Endothelial cell of umbilical vein (primary cell): ENCODE measurements at regions of chr5 and their contacts with region 1.

Region 1: DNA sequence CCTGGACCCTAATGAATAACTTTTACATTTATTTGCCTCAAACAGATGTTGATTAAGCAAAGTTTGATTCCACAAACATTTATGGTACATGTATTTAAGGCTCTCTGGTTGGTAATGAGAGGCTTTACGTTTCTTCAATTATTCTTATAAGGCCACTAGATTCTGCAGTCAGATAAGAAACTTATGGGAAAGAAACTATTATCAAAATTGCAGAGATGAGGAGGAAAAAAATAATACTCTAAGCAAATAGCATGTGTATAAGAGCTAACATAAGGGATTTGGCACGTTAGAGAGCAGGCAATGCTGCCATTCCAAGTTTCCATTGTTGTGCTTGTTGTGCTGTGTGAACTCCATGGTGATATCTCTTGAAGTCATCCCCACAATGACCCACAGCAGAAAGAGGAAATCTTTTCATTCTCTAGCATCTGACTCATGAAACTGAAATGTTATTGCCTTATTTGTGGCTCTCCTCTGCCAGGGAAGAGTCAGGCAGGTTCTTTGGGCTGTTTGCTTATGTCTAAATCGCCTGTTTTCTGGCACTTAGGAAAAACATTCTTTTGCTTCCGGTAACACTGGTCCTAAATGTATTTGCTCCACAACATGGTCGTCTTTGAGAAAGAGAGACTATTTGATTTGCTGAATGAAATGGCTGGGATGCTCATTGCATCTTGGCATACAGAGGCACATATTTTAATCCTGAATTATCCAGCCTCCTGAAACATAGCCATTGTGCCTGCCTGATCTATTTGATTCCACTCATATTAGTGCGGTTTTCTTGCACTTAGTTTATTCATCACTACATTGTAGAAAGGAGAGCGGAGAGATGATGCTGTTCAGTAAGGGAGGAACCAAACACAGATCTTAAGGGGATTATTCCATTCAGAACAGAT is 188.7 kb downstream of the CSNK1G3 start:
- DNase-seq: peak; percentile 99
- H3K4me3 ChIP-seq: no peak overlapping the region
- H3K27ac ChIP-seq: peak overlapping the region; percentile 93
- H3K4me1 ChIP-seq: peaks cover 21% of the 10 kb centered on the region
- H3K27me3 ChIP-seq: no peaks in the 10 kb centered on the region
- CTCF ChIP-seq: no peak
- POLR2A ChIP-seq: peak; percentile 27

Region 2: DNA sequence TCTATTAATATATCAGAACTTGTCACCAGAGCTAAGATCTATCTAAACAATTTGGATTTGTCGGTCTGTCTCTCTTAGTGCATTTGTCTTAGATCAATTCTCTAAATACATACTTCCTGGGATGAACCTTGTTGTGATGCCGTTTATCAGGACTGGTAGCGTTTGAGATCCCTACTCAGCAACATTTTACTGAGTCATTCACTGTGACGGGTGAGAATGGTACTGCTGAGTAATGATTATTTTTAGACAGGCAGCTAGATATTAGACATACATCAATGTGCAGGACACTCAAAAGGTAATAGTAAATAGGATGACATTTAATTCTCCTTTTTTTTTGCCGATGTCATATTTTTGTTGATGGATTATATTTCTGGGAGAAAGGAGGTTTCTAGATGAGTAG is 20.3 kb after region 1 on chr5:
- CTCF ChIA-PET with region 1: interaction called, 3 read pairs
- POLR2A ChIA-PET with region 1: no interaction called
- dilution Hi-C with region 1: no loop called
- intact Hi-C with region 1: loop called (anchors 1 kb)
- DNase-seq: no peak
- H3K4me3 ChIP-seq: no peak overlapping the region
- H3K27ac ChIP-seq: no peak overlapping the region
- H3K4me1 ChIP-seq: peaks cover 17% of the 10 kb centered on the region
- H3K27me3 ChIP-seq: no peaks in the 10 kb centered on the region
- CTCF ChIP-seq: no peak
- POLR2A ChIP-seq: no peak

Region 3: GRCh38 chr5:123881759-123882244 is 181.2 kb after region 1 on chr5:
- CTCF ChIA-PET with region 1: no interaction called
- POLR2A ChIA-PET with region 1: no interaction called
- dilution Hi-C with region 1: no loop called
- intact Hi-C with region 1: loop called (anchors 1 kb)
- DNase-seq: peak; percentile 90
- H3K4me3 ChIP-seq: peak overlapping the region in 1 of 3 experiments; percentile 58
- H3K27ac ChIP-seq: peak overlapping the region; percentile 48
- H3K4me1 ChIP-seq: peaks cover 27% of the 10 kb centered on the region
- H3K27me3 ChIP-seq: peaks cover 3 to 7% of the 10 kb centered on the region in 2 experiments
- CTCF ChIP-seq: no peak
- POLR2A ChIP-seq: no peak

Region 4: GRCh38 chr5:124438903-124439281 is 738.2 kb after region 1 on chr5:
- CTCF ChIA-PET with region 1: no interaction called
- POLR2A ChIA-PET with region 1: no interaction called
- dilution Hi-C with region 1: no loop called
- intact Hi-C with region 1: loop called (anchors 10 kb)
- DNase-seq: peak; percentile 80
- H3K4me3 ChIP-seq: peak overlapping the region in 1 of 3 experiments; percentile 2
- H3K27ac ChIP-seq: no peak overlapping the region
- H3K4me1 ChIP-seq: peaks cover 7% of the 10 kb centered on the region
- H3K27me3 ChIP-seq: no peaks in the 10 kb centered on the region
- CTCF ChIP-seq: no peak
- POLR2A ChIP-seq: no peak